ENCODE measurements at regions of chr2 and their contacts with region 1.

Region 1: DNA sequence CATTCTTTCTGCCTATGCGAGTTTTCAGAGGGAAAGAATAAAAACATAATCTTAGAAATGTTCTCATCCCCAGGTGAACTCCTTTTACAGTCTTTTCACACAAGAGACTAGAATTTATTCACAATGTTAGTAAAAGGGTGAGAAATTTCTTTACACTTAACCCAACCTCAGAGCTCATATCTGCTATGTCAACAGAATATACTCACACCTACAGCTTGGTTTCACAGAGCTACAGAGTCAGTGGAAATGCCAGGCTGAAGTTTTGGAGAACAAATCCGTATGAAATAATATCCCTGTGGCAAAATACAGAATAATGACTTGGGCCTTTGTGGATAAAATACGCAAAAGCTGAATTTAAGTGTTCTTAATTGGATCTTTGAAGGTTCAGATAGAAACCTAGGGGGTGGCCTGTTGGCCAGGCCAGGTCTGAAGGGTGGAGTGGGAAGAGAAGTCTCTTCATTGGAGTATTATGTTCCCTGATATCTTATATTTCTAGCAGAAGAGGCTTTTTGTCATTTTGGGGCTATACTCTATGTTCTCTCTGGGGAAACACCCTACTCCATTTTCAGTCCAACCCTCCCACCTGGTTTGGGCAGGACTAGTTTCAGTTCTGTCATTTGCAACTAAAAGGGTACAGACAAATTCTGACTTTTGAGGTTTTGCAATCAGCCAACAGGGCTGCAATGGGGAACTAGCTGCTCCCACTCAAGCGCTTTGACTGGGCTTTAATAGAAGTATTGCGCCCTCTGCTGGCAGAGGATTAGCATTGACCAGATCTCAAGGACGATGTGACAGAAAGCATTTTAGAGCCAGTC is 25.7 kb downstream of the FBXO48 start:
- DNase-seq: peak; percentile 88

Region 2: DNA sequence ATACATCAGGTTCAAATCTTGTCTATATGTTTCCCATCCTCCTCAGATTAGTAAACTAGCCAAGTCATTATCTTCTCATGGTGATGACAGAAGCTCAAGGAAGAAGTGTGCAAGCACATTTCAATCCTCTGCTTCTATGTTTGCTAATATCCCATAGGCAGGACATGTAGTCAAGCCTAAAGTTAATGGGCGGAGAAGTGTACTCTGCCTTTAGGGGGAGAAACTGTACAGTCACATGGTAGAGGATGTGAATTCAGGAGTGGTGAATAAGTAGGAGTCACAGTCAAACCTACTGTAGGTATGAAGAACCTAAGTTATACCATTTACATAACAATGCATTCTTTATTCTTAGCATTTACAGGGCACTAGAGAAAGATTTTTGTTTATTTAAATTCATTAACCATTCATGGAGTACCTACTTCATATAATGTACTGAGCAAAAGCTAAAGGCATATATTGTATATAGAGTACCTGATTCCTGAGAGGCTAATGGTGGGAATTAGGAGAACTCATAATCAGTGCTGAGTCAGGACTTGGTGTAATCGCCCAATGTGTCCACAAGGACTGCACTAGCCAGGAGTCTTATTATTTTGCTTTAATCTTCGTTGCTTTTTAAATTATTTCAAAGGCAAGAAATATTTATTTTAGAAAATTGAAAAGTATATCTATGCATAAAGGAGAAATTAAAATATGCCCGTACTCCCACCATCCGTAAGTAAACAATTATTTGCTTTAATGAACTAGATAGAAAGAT is 1438.6 kb before region 1 on chr2:
- intact Hi-C with region 1: no loop called
- DNase-seq: no peak

Region 3: DNA sequence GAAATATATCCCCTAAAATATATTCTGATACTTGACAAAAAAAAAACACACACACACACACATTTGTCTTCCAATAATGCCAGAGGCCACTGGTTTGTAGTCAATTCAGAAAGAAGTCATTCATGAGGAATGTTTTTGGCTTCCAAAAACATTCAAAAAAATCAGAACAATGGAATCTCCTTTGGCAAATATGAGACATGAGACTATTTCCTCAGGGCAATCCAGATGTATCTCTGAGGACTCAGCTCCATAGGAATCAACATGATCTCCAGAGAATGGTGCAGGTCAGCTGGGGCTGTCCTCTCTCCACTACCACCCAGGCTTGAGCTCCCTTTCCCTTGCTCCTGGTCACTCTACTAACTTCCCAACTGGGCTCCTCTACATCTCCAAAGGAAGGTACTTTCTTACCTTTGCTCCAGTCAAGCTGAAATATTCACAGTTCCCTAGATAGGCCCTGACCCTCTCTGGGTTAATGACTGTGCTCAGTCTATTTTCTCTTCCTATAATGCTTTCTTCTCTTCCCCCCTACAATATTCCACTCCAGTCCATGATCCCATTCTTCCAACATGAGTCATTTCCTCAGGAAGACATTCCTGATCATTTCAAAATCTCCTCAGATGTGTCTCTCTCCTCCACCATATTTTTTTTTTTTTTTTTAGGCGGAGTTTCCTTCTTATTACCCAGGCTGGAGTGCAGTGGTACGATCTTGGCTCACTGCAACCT is 523.9 kb before region 1 on chr2:
- intact Hi-C with region 1: no loop called
- DNase-seq: no peak

Region 4: GRCh38 chr2:68362069-68362468 is 79.3 kb before region 1 on chr2:
- intact Hi-C with region 1: loop called (anchors 2 kb)
- DNase-seq: peak; percentile 91

Region 5: GRCh38 chr2:68487773-68488355 is 46.5 kb after region 1 on chr2:
- intact Hi-C with region 1: no loop called
- DNase-seq: no peak

Region 6: GRCh38 chr2:68643011-68643873 is 201.9 kb after region 1 on chr2 and contains the start of gene PROKR1:
- intact Hi-C with region 1: no loop called
- DNase-seq: no peak
- total RNA-seq, gene PROKR1: 0.08 TPM

Measured in cardiac septum (tissue), 1 donor.